ENCODE measurements at regions of chr5 and their contacts with region 1.

Region 1: GRCh38 chr5:138632900-138633489 is 57.8 kb upstream of the HSPA9 start:
- DNase-seq: peak; percentile 51 to 82 (median 56)
- ATAC-seq: peak; percentile 94
- H3K4me3 ChIP-seq: no peak overlapping the region
- H3K27ac ChIP-seq: no peak overlapping the region
- H3K4me1 ChIP-seq: peaks cover 0 to 4% of the 10 kb centered on the region in 2 experiments; a peak in 1 of 5 replicates
- H3K27me3 ChIP-seq: peaks cover 0 to 23% of the 10 kb centered on the region in 2 experiments; a peak in 2 of 5 replicates
- CTCF ChIP-seq: peak; percentile 60 to 77 (median 71)
- EP300 ChIP-seq: no peak
- POLR2A ChIP-seq: no peak
- RAD21 ChIP-seq: peak; percentile 34 to 62

Region 2: GRCh38 chr5:138449501-138450239 is 183.3 kb before region 1 on chr5:
- CTCF ChIA-PET with region 1: no interaction called
- POLR2A ChIA-PET with region 1: no interaction called
- in situ Hi-C with region 1: no loop called
- intact Hi-C with region 1: loop called (anchors 10 kb)
- DNase-seq: peak; percentile 90 to 93 (median 92)
- ATAC-seq: peak; percentile 95
- H3K4me3 ChIP-seq: no peak overlapping the region
- H3K27ac ChIP-seq: no peak overlapping the region
- H3K4me1 ChIP-seq: peaks cover 9 to 47% of the 10 kb centered on the region in 2 experiments; a peak in 4 of 5 replicates
- H3K27me3 ChIP-seq: no peaks in the 10 kb centered on the region
- CTCF ChIP-seq: peak; percentile 96 to 98 (median 97)
- EP300 ChIP-seq: no peak
- POLR2A ChIP-seq: no peak
- RAD21 ChIP-seq: peak; percentile 91 to 96

Measured in K562 (cell line).